ENCODE measurements at regions of chr1 and their contacts with region 1.

Region 1: GRCh38 chr1:234065794-234066447 is 161.4 kb downstream of the SLC35F3 start:
- DNase-seq: peak; percentile 33
- H3K4me3 Mint-ChIP-seq: no peak overlapping the region
- H3K27ac Mint-ChIP-seq: no peak overlapping the region
- H3K4me1 Mint-ChIP-seq: no peaks in the 10 kb centered on the region
- H3K27me3 Mint-ChIP-seq: no peaks in the 10 kb centered on the region

Region 2: DNA sequence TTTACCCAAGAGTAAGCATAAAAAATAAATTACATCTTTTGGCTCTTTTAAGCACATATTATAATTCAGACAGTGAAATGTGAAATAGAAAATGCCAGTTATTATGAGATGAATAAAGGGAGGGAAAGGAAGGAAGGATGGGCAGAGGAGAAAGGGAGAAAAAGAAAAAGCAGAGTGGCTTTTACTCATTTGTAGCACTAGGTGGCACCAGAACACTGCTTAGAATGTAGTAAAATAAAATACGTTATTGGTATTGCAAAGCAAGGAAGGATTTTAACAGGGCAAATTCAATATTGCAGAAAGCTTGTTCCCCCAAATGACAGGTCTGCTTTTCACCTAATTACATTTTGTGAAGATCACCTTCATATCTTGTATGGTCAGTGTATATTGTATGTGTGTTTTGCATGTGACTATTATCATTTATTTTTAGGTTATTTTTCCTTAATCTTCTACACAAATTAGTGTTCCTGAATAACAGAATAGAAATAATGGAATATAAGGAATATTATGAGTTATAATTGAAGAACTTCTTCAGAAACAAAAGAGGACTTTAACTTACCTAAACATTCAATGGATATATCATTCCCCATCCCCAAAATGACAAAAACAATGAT is 761.3 kb before region 1 on chr1:
- intact Hi-C with region 1: loop called (anchors 5 kb)
- DNase-seq: no peak
- H3K4me3 Mint-ChIP-seq: no peak overlapping the region
- H3K27ac Mint-ChIP-seq: no peak overlapping the region
- H3K4me1 Mint-ChIP-seq: peaks cover 2% of the 10 kb centered on the region
- H3K27me3 Mint-ChIP-seq: peaks cover 20% of the 10 kb centered on the region

Region 3: GRCh38 chr1:233394860-233395717 is 670.8 kb before region 1 on chr1:
- intact Hi-C with region 1: loop called (anchors 2 kb)
- DNase-seq: no peak
- H3K4me3 Mint-ChIP-seq: no peak overlapping the region
- H3K27ac Mint-ChIP-seq: no peak overlapping the region
- H3K4me1 Mint-ChIP-seq: no peaks in the 10 kb centered on the region
- H3K27me3 Mint-ChIP-seq: peaks cover 21% of the 10 kb centered on the region

Region 4: DNA sequence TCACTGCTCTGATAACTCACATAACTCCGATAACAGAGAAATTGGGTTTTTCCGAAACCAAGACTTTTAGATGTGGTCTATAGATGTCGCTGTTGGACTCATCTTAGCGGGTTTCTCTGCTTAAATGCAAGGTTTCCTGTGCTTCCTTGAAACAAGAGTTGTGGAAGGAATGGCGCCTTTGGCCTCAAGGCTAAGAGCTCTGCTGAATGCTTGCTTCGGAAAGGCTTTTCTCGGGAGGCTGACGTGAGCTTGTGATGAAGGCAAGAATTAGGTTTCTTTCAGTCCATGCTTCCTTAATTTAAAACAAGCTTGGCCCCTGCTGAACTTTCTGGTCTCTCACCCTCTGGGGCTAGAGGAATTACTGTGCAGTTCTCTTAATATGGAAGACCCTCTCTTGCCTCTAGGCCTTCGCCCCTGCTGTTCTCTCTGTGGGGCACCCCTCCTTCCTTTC is 624.9 kb before region 1 on chr1:
- intact Hi-C with region 1: loop called (anchors 1 kb)
- DNase-seq: no peak
- H3K4me3 Mint-ChIP-seq: no peak overlapping the region
- H3K27ac Mint-ChIP-seq: no peak overlapping the region
- H3K4me1 Mint-ChIP-seq: peaks cover 2% of the 10 kb centered on the region
- H3K27me3 Mint-ChIP-seq: peaks cover 13% of the 10 kb centered on the region

Region 5: DNA sequence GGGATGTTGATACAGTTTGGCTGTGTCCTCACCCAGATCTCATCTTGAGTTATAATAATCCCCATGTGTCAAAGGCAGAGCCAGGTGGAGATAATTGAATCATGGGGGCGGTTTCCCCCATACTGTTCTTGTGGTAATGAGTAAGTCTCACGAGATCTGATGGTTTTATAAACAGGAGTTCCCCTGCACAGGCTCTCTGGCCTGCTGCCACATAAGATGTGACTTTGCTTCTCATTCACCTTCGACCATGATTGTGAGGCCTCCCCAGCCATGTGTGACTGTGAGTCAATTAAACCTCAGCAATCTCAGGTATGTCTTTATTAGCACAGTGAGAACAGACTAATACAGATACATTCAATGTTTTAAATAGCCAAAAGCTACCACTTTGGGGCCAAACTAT is 120.3 kb before region 1 on chr1:
- intact Hi-C with region 1: no loop called
- DNase-seq: no peak
- H3K4me3 Mint-ChIP-seq: no peak overlapping the region
- H3K27ac Mint-ChIP-seq: no peak overlapping the region
- H3K4me1 Mint-ChIP-seq: no peaks in the 10 kb centered on the region
- H3K27me3 Mint-ChIP-seq: no peaks in the 10 kb centered on the region

Measured in activated T-helper 2 cell treated with anti-CD3 and anti-CD28 coated beads, Interferon-gamma antibody, Interleukin-2, Interleukin-4, amounts not matched to agents 10 μg/mL and 5 μg/mL and 100 μg/mL, durations not matched to agents 14 hours and 24 hours and 36 hours (primary cell).